ENCODE measurements at regions of chr10 and their contacts with region 1.

Region 1: DNA sequence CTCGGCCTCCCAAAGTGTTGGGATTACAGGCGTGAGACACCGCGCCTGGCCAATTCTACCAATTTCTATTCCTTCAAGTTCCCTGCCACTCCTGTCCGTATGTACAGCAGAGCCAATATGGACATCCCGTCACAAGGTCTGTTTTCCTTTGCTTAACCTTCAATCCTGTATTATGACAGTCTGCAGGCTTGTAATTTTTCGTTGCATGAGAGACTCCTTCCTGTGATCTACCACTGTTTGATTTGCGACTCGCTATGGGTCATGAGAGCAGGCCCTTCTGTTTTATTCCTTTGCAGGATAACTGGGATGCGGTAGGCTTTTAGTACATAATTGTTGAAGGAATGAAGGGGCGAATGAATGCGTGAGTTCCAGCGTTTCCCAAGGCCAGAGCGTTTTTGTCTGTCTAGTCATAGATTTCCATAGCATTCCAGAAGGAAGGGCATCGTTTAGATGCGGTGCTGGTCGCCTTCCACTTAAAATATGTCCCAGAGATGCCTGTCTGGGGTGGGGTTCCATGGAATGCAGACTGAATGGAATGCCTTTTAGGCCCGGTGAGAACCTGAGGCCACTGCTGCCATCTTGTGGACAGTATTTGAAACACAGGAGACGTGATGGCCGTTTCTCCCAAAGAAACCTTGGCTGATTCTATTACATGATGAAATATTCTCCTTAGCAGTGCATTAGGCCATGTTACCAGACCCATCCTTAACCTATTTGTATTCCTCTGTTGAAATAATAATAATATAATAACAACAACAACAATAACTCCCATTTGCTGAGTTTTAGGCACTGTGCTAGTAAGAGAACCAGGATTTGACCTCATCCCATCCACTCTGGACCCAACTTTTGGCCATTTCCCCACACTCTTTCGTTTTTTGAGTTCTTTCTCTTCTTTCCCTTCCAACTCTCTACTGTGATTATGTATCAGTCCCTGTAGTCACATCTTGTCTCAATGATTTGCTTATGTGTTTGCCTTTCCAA is 193.2 kb downstream of the MYOF start:
- DNase-seq: peak; percentile 27 to 61
- ATAC-seq: peak in 7 of 8 donors; percentile 49 to 82 (median 71)
- H3K4me3 ChIP-seq: no peak overlapping the region
- H3K27ac ChIP-seq: no peak overlapping the region
- H3K4me1 ChIP-seq: no peaks in the 10 kb centered on the region
- H3K27me3 ChIP-seq: no peaks in the 10 kb centered on the region
- CTCF ChIP-seq: peak; percentile 71 to 86 (median 80)

Region 2: DNA sequence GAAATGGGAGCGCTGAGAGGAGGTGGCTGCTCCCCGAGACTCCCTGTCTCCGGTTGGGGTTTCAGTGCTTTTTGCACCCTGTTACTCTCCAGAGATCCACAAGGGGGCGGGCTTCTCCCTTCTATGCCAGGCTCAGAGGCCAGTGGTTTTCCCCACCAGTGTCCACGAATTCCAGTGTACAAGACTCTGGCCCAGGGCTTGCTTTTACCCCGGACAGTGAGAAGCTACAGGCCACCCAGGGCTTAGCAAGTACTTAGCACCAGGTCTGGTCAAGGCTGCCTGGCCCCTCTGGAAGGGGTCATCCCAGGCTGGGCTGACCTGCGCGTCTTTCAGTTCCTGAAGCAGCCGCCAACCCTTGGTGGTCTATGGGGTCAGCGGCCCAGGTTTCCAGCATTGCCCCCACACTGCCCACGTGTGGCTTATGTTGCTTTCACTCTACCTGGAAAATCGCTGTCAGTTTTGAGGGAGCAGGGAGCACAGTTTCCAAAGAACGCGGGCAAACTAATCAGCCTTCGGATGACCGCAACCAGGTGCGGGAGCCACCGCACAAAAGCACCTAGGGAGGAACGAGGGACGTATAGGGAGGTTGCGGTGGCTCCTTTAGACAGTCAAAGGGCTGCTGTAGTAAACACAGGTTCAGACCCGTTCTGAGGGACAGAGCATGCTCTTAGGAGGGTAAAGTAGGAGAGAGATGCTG is 208.4 kb before region 1 on chr10:
- intact Hi-C with region 1: loop called (anchors 1 to 10 kb)
- DNase-seq: peak; percentile 27 to 34
- ATAC-seq: peak; percentile 33 to 83 (median 70)
- H3K4me3 ChIP-seq: no peak overlapping the region
- H3K27ac ChIP-seq: no peak overlapping the region
- H3K4me1 ChIP-seq: peaks cover 0 to 5% (median 0%) of the 10 kb centered on the region in 9 donors
- H3K27me3 ChIP-seq: peaks cover 1 to 63% (median 55%) of the 10 kb centered on the region in 7 donors
- CTCF ChIP-seq: peak; percentile 54 to 87 (median 78)

Region 3: DNA sequence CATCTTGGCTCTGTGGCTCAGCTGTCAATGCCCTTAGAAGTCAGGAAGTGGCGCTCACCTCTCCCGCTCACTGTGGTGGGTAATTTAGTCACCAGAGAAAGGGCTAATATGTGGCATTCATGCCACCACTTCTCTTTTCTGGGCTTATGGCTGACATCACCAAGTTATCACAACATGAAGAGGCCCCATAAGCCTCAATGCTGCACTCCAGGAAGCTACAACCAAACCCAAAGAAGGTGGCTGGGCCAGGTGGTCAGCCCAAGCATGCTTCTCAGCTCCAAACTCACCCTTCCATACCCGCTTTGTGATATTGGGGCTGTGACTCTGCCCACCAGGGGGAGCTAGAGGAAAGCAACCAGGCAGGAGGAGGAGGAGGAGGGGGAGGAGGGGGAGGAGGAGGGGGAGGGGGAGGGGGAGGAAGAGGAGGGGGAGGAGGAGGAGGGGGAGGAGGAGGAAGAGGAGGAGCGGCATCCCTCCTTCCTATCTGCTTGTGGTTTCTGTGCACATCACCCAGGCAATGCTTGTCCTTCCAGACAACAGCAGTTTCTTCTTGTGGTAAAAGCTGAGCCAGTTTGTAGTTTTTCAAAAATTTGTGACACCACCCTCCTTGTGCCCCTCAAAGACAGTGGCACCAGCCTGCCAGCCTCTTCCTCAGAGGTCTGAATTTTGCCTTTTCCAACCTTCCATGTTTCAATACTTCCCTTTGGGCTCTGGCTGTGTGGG is 173.1 kb before region 1 on chr10:
- intact Hi-C with region 1: loop called in 9 of 10 experiments (anchors 2 to 10 kb)
- DNase-seq: peak; percentile 53 to 60
- ATAC-seq: peak in 4 of 8 donors; percentile 37 to 70 (median 47)
- H3K4me3 ChIP-seq: no peak overlapping the region
- H3K27ac ChIP-seq: no peak overlapping the region
- H3K4me1 ChIP-seq: no peaks in the 10 kb centered on the region
- H3K27me3 ChIP-seq: peaks cover 0 to 21% (median 16%) of the 10 kb centered on the region in 7 donors
- CTCF ChIP-seq: peak in 8 of 9 donors; percentile 14 to 55 (median 44)

Region 4: GRCh38 chr10:93376372-93377293 is 87.7 kb after region 1 on chr10:
- intact Hi-C with region 1: no loop called
- DNase-seq: peak; percentile 25 to 76
- ATAC-seq: peak; percentile 83 to 97 (median 90)
- H3K4me3 ChIP-seq: peak overlapping the region in 2 of 10 donors; percentile 16 to 20
- H3K27ac ChIP-seq: peak overlapping the region; percentile 11 to 79 (median 70)
- H3K4me1 ChIP-seq: peaks cover 3 to 37% (median 10%) of the 10 kb centered on the region in 9 donors
- H3K27me3 ChIP-seq: no peaks in the 10 kb centered on the region
- CTCF ChIP-seq: peak; percentile 88 to 96 (median 91)